ENCODE measurements at regions of chr4 and their contacts with region 1.

Region 1: GRCh38 chr4:146132445-146132844 is 43.1 kb upstream of the LSM6 start:
- DNase-seq: peak; percentile 70
- ATAC-seq: peak; percentile 100
- H3K4me3 ChIP-seq: no peak overlapping the region
- H3K27ac ChIP-seq: peak overlapping the region; percentile 1; the same call in 1 of the 2 replicates
- H3K4me1 ChIP-seq: peaks cover 14% of the 10 kb centered on the region
- H3K27me3 ChIP-seq: no peaks in the 10 kb centered on the region
- CTCF ChIP-seq: no peak
- EP300 ChIP-seq: peak; percentile 69 to 72; a peak in 3 of 4 replicates
- POLR2A ChIP-seq: no peak
- RAD21 ChIP-seq: no peak

Region 2: GRCh38 chr4:146059865-146060264 is 72.6 kb before region 1 on chr4:
- CTCF ChIA-PET with region 1: no interaction called
- POLR2A ChIA-PET with region 1: no interaction called
- RAD21 ChIA-PET with region 1: no interaction called
- SMC1A ChIA-PET with region 1: no interaction called
- in situ Hi-C with region 1: no loop called
- intact Hi-C with region 1: loop called (anchors 2 kb)
- DNase-seq: peak; percentile 84
- ATAC-seq: peak; percentile 86
- H3K4me3 ChIP-seq: no peak overlapping the region
- H3K27ac ChIP-seq: peak overlapping the region; percentile 86
- H3K4me1 ChIP-seq: peaks cover 50% of the 10 kb centered on the region
- H3K27me3 ChIP-seq: no peaks in the 10 kb centered on the region
- CTCF ChIP-seq: no peak
- EP300 ChIP-seq: peak; percentile 31 to 73; a peak in 3 of 4 replicates
- POLR2A ChIP-seq: 0 out of 2 replicates have a peak, but pooled peaks have one; percentile 24
- RAD21 ChIP-seq: peak; percentile 23; the same call in 1 of the 2 replicates

Region 3: GRCh38 chr4:146159384-146160058 is 27.1 kb after region 1 on chr4:
- CTCF ChIA-PET with region 1: interaction called, 4 read pairs
- POLR2A ChIA-PET with region 1: no interaction called
- RAD21 ChIA-PET with region 1: interaction called, 4 read pairs
- SMC1A ChIA-PET with region 1: interaction called, 3 read pairs
- in situ Hi-C with region 1: no loop called
- intact Hi-C with region 1: loop called (anchors 2 kb)
- DNase-seq: no peak
- ATAC-seq: peak; percentile 94
- H3K4me3 ChIP-seq: peak overlapping the region; percentile 24; the same call in 1 of the 2 replicates
- H3K27ac ChIP-seq: peak overlapping the region; percentile 49
- H3K4me1 ChIP-seq: peaks cover 16% of the 10 kb centered on the region
- H3K27me3 ChIP-seq: no peaks in the 10 kb centered on the region
- CTCF ChIP-seq: no peak
- EP300 ChIP-seq: no peak
- POLR2A ChIP-seq: no peak
- RAD21 ChIP-seq: no peak

Region 4: GRCh38 chr4:146175541-146176453 is 43.4 kb after region 1 on chr4 and contains the start of gene LSM6:
- CTCF ChIA-PET with region 1: no interaction called
- POLR2A ChIA-PET with region 1: no interaction called
- RAD21 ChIA-PET with region 1: no interaction called
- SMC1A ChIA-PET with region 1: no interaction called
- in situ Hi-C with region 1: no loop called
- intact Hi-C with region 1: loop called (anchors 5 kb)
- DNase-seq: peak; percentile 36
- ATAC-seq: peak; percentile 89
- H3K4me3 ChIP-seq: peak within 1 kb of the TSS; percentile 84
- H3K27ac ChIP-seq: peak within 1 kb of the TSS; percentile 92
- H3K4me1 ChIP-seq: peaks cover 13% of the 10 kb centered on the region
- H3K27me3 ChIP-seq: no peaks in the 10 kb centered on the region
- CTCF ChIP-seq: no peak
- EP300 ChIP-seq: no peak
- POLR2A ChIP-seq: peak; percentile 87
- RAD21 ChIP-seq: no peak
- polyA plus RNA-seq, gene LSM6: 261 to 262 TPM

Region 5: DNA sequence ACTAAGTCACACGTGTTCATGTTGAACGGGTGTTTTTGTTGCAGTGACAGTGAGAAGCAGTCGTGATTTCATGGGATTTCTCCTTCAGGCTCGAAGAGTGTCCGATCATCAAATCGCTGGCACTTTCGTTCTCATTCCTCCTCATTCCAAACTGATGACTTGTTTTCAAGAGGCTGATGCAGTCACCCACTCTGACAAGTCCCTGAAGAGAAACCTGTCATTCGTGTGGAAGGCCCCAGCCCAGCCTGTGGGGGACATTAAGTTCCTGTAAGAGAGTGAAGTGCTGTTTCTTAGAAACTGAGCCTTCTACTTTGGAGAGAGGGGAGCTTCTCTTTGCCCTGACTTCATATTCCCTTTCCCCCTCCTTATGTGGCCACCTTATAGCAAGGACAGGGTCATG is 89.9 kb after region 1 on chr4:
- CTCF ChIA-PET with region 1: no interaction called
- POLR2A ChIA-PET with region 1: no interaction called
- RAD21 ChIA-PET with region 1: no interaction called
- SMC1A ChIA-PET with region 1: no interaction called
- in situ Hi-C with region 1: no loop called
- intact Hi-C with region 1: no loop called
- DNase-seq: no peak
- ATAC-seq: no peak; the same call in 2 of the 3 replicates
- H3K4me3 ChIP-seq: no peak overlapping the region
- H3K27ac ChIP-seq: no peak overlapping the region
- H3K4me1 ChIP-seq: no peaks in the 10 kb centered on the region
- H3K27me3 ChIP-seq: no peaks in the 10 kb centered on the region
- CTCF ChIP-seq: no peak
- EP300 ChIP-seq: no peak
- POLR2A ChIP-seq: no peak
- RAD21 ChIP-seq: no peak